CD4-positive, alpha-beta T cell (primary cell): ENCODE measurements at regions of chr5 and their contacts with region 1.

Region 1: GRCh38 chr5:135032999-135033897 is 780 bp downstream of the PITX1 start:
- DNase-seq: peak in 1 of 14 experiments; percentile 17
- ATAC-seq: no peak
- H3K4me3 ChIP-seq: peak overlapping the region; percentile 19
- H3K4me3 Mint-ChIP-seq: peak overlapping the region; percentile 84
- H3K27ac ChIP-seq: no peak overlapping the region
- H3K27ac Mint-ChIP-seq: no peak overlapping the region
- H3K4me1 ChIP-seq: peaks cover 31% of the 10 kb centered on the region
- H3K4me1 Mint-ChIP-seq: peaks cover 50% of the 10 kb centered on the region
- H3K27me3 ChIP-seq: peaks cover 65 to 85% of the 10 kb centered on the region in 2 experiments
- H3K27me3 Mint-ChIP-seq: peaks cover 88% of the 10 kb centered on the region
- CTCF ChIP-seq: no peak

Region 2: DNA sequence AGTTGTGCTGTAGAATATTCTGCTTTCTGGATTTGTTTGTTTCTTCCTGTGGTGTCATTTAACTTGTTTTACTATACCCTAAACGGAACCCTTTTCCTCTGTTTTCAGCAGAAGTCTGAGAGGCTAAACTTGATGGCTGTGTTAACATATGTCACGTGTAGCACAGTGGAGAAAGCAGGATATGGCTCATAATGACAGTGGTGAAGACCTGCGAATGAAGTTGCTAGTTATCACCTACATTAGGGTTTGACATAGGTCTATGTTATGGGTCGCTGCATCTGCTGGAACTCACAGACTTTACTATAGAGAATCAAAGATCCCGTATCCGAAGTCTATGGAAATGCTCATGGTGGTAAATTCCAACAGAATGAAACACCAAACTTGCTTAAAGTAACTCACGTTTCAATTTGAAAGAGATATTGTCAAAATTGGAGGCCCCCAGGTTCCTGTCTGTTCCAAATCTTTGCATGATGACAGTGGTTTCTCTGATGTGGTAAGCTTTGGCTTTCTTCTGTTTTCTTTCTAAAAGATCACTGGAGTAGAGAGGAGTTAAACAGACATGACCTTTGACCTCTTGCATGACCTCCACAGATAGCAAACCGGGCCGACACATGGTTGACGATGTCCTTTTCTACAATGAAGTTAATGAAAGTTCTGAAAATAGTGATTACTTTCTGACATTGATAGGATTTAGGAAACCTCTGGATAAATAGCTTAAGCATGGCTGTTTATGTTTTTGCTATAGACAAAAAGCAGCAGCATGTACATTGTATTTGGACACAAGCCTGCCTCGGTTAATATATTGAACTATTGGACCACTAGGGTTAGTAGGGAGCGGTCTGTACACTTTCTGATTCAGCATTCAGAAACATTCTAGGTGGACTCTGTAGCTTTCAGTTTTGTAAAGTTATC is 68.6 kb before region 1 on chr5:
- CTCF ChIA-PET with region 1: no interaction called
- POLR2A ChIA-PET with region 1: no interaction called
- intact Hi-C with region 1: loop called in 1 of 2 experiments (anchors 2 kb)
- DNase-seq: peak in 5 of 14 experiments; percentile 10 to 64 (median 53)
- ATAC-seq: peak; percentile 91
- H3K4me3 ChIP-seq: no peak overlapping the region
- H3K4me3 Mint-ChIP-seq: peak overlapping the region; percentile 53
- H3K27ac ChIP-seq: peak overlapping the region; percentile 3 to 42
- H3K27ac Mint-ChIP-seq: peak overlapping the region; percentile 93
- H3K4me1 ChIP-seq: peaks cover 19% of the 10 kb centered on the region
- H3K4me1 Mint-ChIP-seq: peaks cover 39% of the 10 kb centered on the region
- H3K27me3 ChIP-seq: no peaks in the 10 kb centered on the region
- H3K27me3 Mint-ChIP-seq: no peaks in the 10 kb centered on the region
- CTCF ChIP-seq: no peak

Region 3: DNA sequence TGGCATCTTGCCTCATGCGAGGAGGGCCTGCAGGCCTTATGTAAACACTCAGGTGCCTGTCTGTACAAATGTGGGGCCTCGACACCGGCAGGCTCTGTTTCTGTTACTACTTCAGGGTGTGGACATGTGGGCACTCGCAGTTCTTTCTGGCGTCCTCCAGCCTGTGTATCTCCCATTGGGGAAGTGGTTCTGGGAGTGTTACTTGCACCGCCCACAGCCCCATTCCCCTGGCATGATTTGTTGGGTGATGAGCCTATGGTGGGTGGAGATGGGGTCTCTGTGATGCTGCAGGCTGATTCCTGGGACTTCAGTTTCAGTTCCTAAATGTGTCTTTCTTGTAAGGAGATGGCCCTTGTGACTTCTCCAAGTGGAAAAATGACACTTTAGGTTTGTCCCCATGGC is 82.9 kb after region 1 on chr5:
- CTCF ChIA-PET with region 1: no interaction called
- POLR2A ChIA-PET with region 1: no interaction called
- intact Hi-C with region 1: no loop called
- DNase-seq: peak in 3 of 14 experiments; percentile 7 to 22 (median 11)
- ATAC-seq: no peak
- H3K4me3 ChIP-seq: no peak overlapping the region
- H3K4me3 Mint-ChIP-seq: no peak overlapping the region
- H3K27ac ChIP-seq: no peak overlapping the region
- H3K27ac Mint-ChIP-seq: no peak overlapping the region
- H3K4me1 ChIP-seq: no peaks in the 10 kb centered on the region
- H3K4me1 Mint-ChIP-seq: no peaks in the 10 kb centered on the region
- H3K27me3 ChIP-seq: peaks cover 0 to 2% of the 10 kb centered on the region in 2 experiments
- H3K27me3 Mint-ChIP-seq: no peaks in the 10 kb centered on the region
- CTCF ChIP-seq: no peak

Region 4: DNA sequence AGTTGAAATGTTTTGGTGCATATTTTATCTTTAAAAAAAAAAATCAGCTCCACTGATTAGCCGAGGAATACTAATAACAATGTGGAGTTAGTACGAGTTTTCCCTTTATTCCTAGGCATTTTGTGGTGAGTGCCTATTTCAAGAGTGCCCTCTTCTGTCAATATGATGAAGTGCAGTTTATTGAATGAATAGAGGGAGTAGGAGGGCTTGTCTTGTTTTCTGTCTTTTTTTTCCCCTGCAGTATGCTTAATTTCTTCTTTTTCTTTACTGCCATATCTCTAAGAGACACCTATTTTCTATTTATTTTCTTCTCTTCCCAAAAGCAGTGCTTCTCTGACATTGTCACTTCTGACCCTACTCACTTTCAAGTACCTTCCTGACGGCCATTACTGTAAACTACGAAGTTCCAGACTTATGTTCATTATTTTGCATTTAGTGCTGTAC is 170.4 kb after region 1 on chr5:
- CTCF ChIA-PET with region 1: no interaction called
- POLR2A ChIA-PET with region 1: no interaction called
- intact Hi-C with region 1: no loop called
- DNase-seq: no peak
- ATAC-seq: no peak
- H3K4me3 ChIP-seq: no peak overlapping the region
- H3K4me3 Mint-ChIP-seq: no peak overlapping the region
- H3K27ac ChIP-seq: no peak overlapping the region
- H3K27ac Mint-ChIP-seq: no peak overlapping the region
- H3K4me1 ChIP-seq: no peaks in the 10 kb centered on the region
- H3K4me1 Mint-ChIP-seq: no peaks in the 10 kb centered on the region
- H3K27me3 ChIP-seq: peaks cover 0 to 3% of the 10 kb centered on the region in 2 experiments
- H3K27me3 Mint-ChIP-seq: peaks cover 41% of the 10 kb centered on the region
- CTCF ChIP-seq: no peak